GM13977 (cell line): ENCODE measurements at regions of chr7 and their contacts with region 1.

Region 1: DNA sequence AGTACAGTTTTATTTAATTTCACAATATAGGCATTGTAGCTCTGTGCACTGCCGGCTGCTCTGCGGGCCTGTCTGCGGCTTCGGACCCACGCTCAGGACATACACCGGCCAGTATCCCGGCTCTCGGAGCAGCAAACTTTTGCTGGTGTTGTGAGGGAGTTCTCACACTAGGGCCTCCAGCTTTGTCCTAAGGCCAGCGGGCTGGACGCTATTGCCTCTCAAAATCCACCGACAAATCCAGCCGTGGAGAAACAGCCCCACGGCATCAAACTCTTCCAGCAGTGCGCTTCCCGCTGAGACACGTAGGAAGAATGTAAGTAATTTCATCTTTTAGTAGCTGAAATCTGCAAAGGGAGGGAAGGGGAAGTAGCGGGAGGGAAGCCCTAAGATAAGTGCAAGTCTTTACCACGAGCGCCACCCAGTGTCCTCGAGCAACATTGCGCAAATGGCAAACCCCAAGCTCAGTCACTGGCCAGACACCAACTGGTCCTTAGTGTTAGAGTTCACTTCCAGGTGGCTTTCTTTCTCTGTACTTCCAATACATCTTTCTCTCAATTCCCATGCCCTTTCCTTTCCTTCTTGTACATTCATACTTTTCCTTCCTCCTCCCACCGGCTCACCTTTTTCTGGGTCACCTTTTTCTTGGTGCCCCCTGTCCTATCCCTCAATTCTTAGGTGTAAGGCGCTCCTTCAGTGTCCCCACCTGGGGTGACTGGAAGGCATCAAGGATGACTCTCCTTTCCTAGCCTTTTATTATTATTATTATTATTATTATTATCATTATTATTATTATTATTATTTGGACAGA is 3.0 kb upstream of the DLX5 start:
- DNase-seq: peak; percentile 83
- CTCF ChIP-seq: peak; percentile 92

Region 2: DNA sequence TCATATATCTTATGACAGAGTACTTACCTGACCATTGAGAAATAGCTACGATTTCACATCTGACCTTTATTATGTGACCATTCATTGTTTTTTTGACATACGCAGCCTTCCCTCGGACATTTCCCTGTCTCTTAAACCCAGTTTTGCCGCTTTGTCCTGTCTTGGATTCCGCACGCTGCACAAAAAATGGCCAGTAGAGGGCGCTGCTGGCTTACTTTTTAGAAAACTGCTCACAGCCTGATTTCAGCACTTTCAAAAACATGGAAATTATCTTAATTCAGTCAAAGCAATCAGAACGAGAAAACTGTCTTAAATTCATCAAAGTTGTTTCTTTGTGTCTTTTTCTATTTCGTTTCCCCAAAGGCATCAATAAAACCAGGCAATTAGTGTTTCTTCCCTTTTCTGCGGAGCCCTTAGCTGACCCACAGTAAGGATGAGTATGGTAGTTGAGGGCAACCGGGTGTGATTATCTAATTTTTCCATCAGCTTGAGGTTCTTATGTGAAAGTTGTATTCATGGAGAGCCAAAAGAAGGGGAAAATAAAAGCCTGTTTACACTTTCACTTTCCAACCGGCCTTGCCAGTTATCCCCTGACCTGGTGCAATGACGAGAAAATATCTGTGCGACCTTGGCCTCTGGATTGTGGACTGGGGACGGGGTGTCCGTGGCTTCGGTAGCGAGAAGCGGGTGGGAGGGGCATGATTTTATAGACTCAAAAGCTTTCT is 1110.9 kb before region 1 on chr7:
- in situ Hi-C with region 1: loop called (anchors 25 kb)
- DNase-seq: peak; percentile 44
- CTCF ChIP-seq: peak; percentile 93

Region 3: DNA sequence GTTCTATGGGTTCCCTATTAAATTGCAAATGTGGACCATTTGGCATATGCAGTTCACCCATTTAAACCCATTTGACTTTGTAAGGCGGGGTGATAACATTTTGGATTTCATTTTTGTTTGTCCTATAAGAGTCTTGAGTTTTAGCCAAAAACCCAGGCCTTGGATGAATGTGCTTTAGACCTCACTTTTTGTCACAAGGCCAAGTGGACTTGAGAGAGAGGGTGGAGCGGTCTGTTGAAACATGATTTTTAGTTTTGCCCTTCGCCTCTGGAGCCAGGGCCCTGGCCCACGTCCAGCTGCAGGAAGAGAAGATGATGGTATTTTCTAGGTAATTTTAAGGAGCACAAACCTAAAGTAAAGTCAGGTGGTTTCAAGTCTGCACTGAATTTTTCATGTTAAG is 965.8 kb before region 1 on chr7:
- in situ Hi-C with region 1: loop called (anchors 25 kb)
- DNase-seq: no peak
- CTCF ChIP-seq: no peak